ENCODE measurements at regions of chr10 and their contacts with region 1.

Region 1: DNA sequence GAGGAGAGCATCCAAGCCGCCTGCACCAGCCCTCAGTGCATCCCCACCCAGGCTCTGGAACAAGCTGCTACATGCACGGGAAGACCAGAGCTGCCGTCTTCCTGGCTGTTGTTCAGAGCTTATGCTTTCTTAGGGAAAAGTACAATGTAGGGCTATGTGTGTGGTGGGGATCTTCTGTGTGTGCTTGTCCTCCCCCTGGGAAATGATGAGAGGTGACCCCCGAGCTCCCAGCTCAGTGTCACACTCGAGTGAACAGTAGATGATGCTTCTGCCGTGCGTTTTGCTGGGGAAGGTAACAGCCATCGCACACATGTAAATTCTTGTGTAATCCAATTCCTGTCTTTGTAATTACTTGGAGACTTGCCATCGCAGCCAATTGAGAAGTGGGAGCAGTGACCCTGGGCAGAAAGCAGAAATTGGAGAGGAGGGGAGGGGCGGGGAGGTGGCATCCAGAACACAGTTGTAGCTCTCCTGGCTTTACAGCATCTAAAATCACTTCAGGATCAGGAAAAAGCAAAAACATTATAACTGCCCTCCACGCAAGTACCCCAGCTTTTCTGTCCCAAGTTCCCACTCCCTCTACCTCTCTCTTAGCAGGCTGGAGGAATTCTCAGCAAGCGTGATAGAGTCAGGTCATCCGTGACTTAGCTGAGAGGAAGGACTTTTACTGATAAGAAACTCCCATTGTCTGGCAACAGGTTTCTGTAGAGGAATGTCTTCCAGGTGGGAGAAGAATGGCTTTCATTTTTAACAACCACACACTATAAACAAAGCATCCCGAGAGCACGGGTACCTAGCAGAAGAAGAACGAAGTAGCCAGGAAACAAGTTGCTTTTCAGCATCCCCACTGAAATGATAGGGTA is 149.6 kb downstream of the TCF7L2 start:
- DNase-seq: no peak
- H3K4me3 ChIP-seq: no peak overlapping the region
- H3K27ac ChIP-seq: no peak overlapping the region
- H3K27me3 ChIP-seq: no peaks in the 10 kb centered on the region
- CTCF ChIP-seq: no peak

Region 2: GRCh38 chr10:112811740-112812551 is 287.7 kb before region 1 on chr10:
- CTCF ChIA-PET with region 1: no interaction called
- POLR2A ChIA-PET with region 1: no interaction called
- DNase-seq: peak; percentile 80
- H3K4me3 ChIP-seq: peak overlapping the region; percentile 54
- H3K27ac ChIP-seq: peak overlapping the region; percentile 81
- H3K27me3 ChIP-seq: no peaks in the 10 kb centered on the region
- CTCF ChIP-seq: no peak

Region 3: DNA sequence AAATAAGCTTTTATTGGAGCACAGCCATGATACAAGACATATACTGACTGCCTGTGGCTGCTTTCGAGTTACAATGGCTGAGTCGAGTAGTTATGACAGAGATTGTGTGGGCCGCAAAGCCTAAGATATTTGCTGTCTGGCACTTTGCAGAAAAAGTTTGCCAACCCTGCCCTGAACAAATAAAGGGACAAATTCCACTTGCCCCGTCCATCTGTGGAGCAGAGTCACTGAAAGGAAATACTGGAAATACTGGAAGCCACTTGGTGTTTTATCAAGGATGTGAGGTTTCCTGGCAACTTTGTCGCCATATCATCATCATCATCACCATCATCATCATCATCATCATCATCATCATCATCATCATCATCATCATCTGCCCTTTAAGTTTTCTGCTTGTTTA is 63.9 kb before region 1 on chr10:
- CTCF ChIA-PET with region 1: interaction called, 10 read pairs
- POLR2A ChIA-PET with region 1: no interaction called
- DNase-seq: no peak
- H3K4me3 ChIP-seq: no peak overlapping the region
- H3K27ac ChIP-seq: no peak overlapping the region
- H3K27me3 ChIP-seq: no peaks in the 10 kb centered on the region
- CTCF ChIP-seq: no peak

Region 4: DNA sequence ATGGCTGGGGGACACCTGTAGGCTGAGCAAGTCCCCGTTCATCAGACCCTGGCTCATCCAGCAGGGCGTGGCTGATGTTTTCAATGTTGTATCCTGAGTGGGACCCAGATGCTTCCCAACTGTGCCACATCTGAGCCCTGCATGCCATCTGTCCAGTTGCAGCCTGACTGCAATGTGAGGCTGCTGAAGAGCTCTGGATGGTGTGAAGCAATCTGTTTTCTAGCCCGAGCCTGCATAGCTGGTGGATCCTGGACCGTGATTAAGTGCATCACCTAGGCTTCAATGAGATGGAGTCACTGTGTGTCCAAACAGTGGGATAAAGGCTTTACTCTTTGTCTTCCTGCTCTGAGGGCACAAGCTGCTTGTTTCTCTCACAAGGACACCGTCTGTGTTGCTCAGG is 49.8 kb before region 1 on chr10:
- CTCF ChIA-PET with region 1: no interaction called
- POLR2A ChIA-PET with region 1: no interaction called
- DNase-seq: no peak
- H3K4me3 ChIP-seq: no peak overlapping the region
- H3K27ac ChIP-seq: no peak overlapping the region
- H3K27me3 ChIP-seq: no peaks in the 10 kb centered on the region
- CTCF ChIP-seq: no peak

Region 5: GRCh38 chr10:113126229-113127201 is 26.9 kb after region 1 on chr10:
- CTCF ChIA-PET with region 1: interaction called, 3 read pairs
- POLR2A ChIA-PET with region 1: interaction called, 12 read pairs
- DNase-seq: peak; percentile 27
- H3K4me3 ChIP-seq: peak overlapping the region; percentile 48
- H3K27ac ChIP-seq: no peak overlapping the region
- H3K27me3 ChIP-seq: no peaks in the 10 kb centered on the region
- CTCF ChIP-seq: peak; percentile 41

Region 6: GRCh38 chr10:113252650-113253618 is 153.3 kb after region 1 on chr10:
- CTCF ChIA-PET with region 1: no interaction called
- POLR2A ChIA-PET with region 1: no interaction called
- DNase-seq: no peak
- H3K4me3 ChIP-seq: no peak overlapping the region
- H3K27ac ChIP-seq: no peak overlapping the region
- H3K27me3 ChIP-seq: peaks cover 9% of the 10 kb centered on the region
- CTCF ChIP-seq: no peak